CD4-positive, alpha-beta T cell (primary cell): ENCODE measurements at regions of chr4 and their contacts with region 1.

Region 1: GRCh38 chr4:77862478-77863216 is at the start of gene MRPL1:
- DNase-seq: peak; percentile 78 to 96 (median 85)
- ATAC-seq: peak; percentile 77
- H3K4me3 ChIP-seq: peak within 1 kb of the TSS; percentile 77
- H3K4me3 Mint-ChIP-seq: peak within 1 kb of the TSS; percentile 91
- H3K27ac ChIP-seq: peak within 1 kb of the TSS; percentile 99
- H3K27ac Mint-ChIP-seq: peak within 1 kb of the TSS; percentile 99
- H3K4me1 ChIP-seq: peaks cover 42% of the 10 kb centered on the region
- H3K4me1 Mint-ChIP-seq: peaks cover 66% of the 10 kb centered on the region
- H3K27me3 ChIP-seq: no peaks in the 10 kb centered on the region
- H3K27me3 Mint-ChIP-seq: peaks cover 7% of the 10 kb centered on the region
- CTCF ChIP-seq: no peak
- total RNA-seq, gene MRPL1: 14.8 to 17.5 TPM

Region 2: DNA sequence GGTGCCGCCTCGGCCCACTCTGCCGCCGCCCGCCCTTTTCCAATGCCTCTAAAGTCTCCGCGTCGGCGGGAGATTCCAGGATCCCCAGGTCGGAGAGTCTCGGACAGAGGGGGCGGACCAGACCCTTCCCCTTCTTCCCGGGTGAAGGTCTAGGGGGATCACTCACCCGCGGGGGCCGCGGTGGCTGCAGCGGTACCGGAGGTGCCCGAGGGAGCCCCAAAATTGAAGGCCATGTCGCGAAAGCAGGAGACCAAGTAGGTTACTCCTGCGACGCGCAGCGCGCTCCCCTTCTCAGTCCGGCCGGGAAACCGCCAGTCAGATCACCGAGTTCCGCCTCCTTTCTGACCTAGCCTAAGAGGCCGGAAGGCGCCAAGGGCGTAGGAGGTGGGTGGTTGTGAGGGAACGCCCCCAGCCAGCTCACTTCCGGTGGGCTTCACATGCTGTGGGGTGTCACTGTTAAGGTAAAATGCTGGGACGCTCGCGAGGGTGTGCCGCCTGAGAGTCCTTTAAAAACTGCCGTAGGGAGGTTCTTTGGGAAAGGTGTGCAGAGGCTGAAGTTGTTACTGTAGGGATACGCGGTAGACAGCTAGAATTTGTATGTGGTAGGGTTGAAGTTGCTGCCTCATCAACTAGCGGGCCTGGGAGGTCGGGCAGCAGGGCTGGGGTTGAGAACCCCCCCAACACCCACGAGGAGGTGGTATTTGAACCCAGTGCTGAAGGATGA is 1714.3 kb before region 1 on chr4 and contains the start of gene NUP54:
- CTCF ChIA-PET with region 1: no interaction called
- POLR2A ChIA-PET with region 1: interaction called, 6 read pairs
- intact Hi-C with region 1: loop called in 1 of 2 experiments (anchors 5 kb)
- DNase-seq: peak; percentile 90 to 97 (median 93)
- ATAC-seq: peak; percentile 97
- H3K4me3 ChIP-seq: peak within 1 kb of the TSS; percentile 95
- H3K4me3 Mint-ChIP-seq: peak within 1 kb of the TSS; percentile 99
- H3K27ac ChIP-seq: peak within 1 kb of the TSS; percentile 80 to 90
- H3K27ac Mint-ChIP-seq: peak within 1 kb of the TSS; percentile 92
- H3K4me1 ChIP-seq: peaks cover 15% of the 10 kb centered on the region
- H3K4me1 Mint-ChIP-seq: peaks cover 38% of the 10 kb centered on the region
- H3K27me3 ChIP-seq: no peaks in the 10 kb centered on the region
- H3K27me3 Mint-ChIP-seq: no peaks in the 10 kb centered on the region
- CTCF ChIP-seq: no peak
- total RNA-seq, gene NUP54: 94.1 to 108 TPM

Region 3: DNA sequence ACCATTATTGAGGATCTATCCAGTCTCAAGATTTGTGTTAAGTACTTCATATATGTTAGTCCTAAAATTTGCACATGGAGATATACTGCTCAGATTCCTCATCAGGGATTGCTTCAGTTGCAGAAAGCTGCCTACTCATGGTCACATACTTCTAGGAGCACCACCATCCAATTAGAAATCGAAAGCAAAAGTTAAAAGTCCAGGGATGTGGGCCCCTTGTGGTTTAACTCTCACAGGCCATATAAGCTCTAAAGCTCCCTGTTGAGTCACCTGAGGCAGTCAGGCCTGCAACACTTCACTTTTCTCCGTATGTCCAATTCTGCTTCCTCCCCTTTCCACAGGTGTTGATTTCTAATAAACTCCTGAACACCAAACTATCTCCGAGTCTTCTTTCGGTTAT is 127.7 kb before region 1 on chr4:
- CTCF ChIA-PET with region 1: interaction called, 5 read pairs
- POLR2A ChIA-PET with region 1: interaction called, 8 read pairs
- intact Hi-C with region 1: loop called (anchors 5 kb)
- DNase-seq: peak in 5 of 14 experiments; percentile 4 to 81 (median 62)
- ATAC-seq: peak; percentile 71
- H3K4me3 ChIP-seq: no peak overlapping the region
- H3K4me3 Mint-ChIP-seq: peak overlapping the region; percentile 61
- H3K27ac ChIP-seq: no peak overlapping the region
- H3K27ac Mint-ChIP-seq: peak overlapping the region; percentile 78
- H3K4me1 ChIP-seq: peaks cover 5% of the 10 kb centered on the region
- H3K4me1 Mint-ChIP-seq: peaks cover 82% of the 10 kb centered on the region
- H3K27me3 ChIP-seq: no peaks in the 10 kb centered on the region
- H3K27me3 Mint-ChIP-seq: no peaks in the 10 kb centered on the region
- CTCF ChIP-seq: no peak

Region 4: DNA sequence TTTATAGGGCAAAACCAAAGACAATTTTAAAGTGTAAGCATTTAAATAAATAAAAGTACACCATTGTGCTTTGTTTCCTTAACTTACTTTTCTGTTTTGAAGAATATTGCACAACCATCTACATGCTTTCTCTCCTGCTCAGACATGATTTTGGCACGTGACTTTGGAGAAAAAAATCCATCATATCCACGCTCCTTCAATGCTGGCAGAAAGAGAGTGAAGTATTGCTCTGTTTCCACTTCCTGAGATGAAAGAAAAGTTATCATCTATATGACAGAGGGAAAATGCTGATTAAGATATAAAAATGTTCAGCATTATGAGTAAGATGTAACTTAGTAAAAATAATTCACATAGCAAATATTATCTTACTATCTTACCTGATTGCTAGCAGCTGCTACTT is 120.6 kb before region 1 on chr4:
- CTCF ChIA-PET with region 1: no interaction called
- POLR2A ChIA-PET with region 1: interaction called, 5 read pairs
- intact Hi-C with region 1: loop called (anchors 5 kb)
- DNase-seq: no peak
- ATAC-seq: no peak
- H3K4me3 ChIP-seq: no peak overlapping the region
- H3K4me3 Mint-ChIP-seq: no peak overlapping the region
- H3K27ac ChIP-seq: no peak overlapping the region
- H3K27ac Mint-ChIP-seq: peak overlapping the region; percentile 63
- H3K4me1 ChIP-seq: peaks cover 5% of the 10 kb centered on the region
- H3K4me1 Mint-ChIP-seq: peaks cover 70% of the 10 kb centered on the region
- H3K27me3 ChIP-seq: no peaks in the 10 kb centered on the region
- H3K27me3 Mint-ChIP-seq: no peaks in the 10 kb centered on the region
- CTCF ChIP-seq: no peak

Region 5: GRCh38 chr4:77782102-77782835 is 80.4 kb before region 1 on chr4:
- CTCF ChIA-PET with region 1: interaction called, 4 read pairs
- POLR2A ChIA-PET with region 1: interaction called, 11 read pairs
- intact Hi-C with region 1: no loop called
- DNase-seq: no peak
- ATAC-seq: no peak
- H3K4me3 ChIP-seq: no peak overlapping the region
- H3K4me3 Mint-ChIP-seq: peak overlapping the region; percentile 28
- H3K27ac ChIP-seq: no peak overlapping the region
- H3K27ac Mint-ChIP-seq: peak overlapping the region; percentile 8
- H3K4me1 ChIP-seq: peaks cover 35% of the 10 kb centered on the region
- H3K4me1 Mint-ChIP-seq: peaks cover 81% of the 10 kb centered on the region
- H3K27me3 ChIP-seq: no peaks in the 10 kb centered on the region
- H3K27me3 Mint-ChIP-seq: no peaks in the 10 kb centered on the region
- CTCF ChIP-seq: no peak

Region 6: DNA sequence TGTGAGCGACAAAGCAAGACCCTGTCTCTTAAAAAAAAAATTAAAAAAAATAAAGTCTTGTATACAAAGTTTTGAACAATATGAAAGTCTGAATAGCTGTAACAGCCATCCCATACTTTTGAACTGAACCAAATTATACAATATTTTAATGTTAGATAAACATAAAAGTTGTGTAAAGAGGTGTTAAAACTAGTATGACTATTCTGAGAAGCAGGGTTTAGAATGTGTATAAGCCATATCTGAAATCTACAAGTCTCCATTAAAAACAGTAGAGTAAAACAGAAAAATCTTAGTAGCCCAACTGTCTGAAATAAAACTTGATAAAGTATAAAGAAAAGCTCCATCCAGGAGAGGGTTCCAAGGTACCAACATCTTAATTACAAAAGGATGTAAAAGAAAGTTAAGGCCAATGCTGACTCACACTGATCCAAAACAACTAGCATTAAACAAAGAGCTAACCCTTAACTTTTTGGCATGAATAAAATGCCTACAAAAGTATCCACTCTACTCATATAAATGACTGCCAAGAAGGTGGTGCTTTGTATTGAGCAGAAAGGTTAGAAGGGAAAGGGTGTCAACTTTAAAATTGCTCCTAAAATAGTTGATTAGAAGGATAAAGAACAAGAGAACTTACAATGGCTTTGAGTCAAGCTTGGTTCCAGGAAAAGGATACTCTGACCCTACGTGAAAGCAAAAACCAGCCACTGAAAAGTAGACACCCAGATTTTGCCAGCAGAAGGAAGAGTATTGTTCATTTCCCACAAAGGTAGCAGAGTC is 62.0 kb before region 1 on chr4:
- CTCF ChIA-PET with region 1: interaction called, 14 read pairs
- POLR2A ChIA-PET with region 1: interaction called, 63 read pairs
- intact Hi-C with region 1: no loop called
- DNase-seq: no peak
- ATAC-seq: peak; percentile 3
- H3K4me3 ChIP-seq: peak overlapping the region; percentile 33
- H3K4me3 Mint-ChIP-seq: peak overlapping the region; percentile 75
- H3K27ac ChIP-seq: peak overlapping the region in 1 of 2 donors; percentile 73
- H3K27ac Mint-ChIP-seq: peak overlapping the region; percentile 77
- H3K4me1 ChIP-seq: peaks cover 33% of the 10 kb centered on the region
- H3K4me1 Mint-ChIP-seq: peaks cover 88% of the 10 kb centered on the region
- H3K27me3 ChIP-seq: no peaks in the 10 kb centered on the region
- H3K27me3 Mint-ChIP-seq: no peaks in the 10 kb centered on the region
- CTCF ChIP-seq: no peak

Region 7: DNA sequence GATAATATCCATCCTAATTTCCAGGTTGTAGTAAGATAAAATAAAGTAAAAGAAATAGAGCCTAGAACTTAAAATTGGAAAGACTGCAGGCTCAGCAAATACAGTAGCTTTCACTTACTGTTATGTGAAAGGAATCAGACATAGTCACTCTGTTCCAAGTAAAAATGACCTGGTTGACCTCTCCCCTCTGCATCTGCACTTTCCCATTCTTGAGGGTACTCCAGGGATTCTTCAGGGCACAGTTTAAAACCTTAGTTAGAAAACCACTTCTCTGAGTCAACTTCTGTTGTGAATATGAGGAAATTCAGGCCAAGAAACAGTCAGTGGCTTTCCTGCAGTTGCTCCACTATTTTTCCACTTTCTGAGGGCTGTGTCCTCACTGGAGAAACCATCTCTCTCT is 237.4 kb after region 1 on chr4:
- CTCF ChIA-PET with region 1: no interaction called
- POLR2A ChIA-PET with region 1: no interaction called
- intact Hi-C with region 1: no loop called
- DNase-seq: no peak
- ATAC-seq: no peak
- H3K4me3 ChIP-seq: no peak overlapping the region
- H3K4me3 Mint-ChIP-seq: no peak overlapping the region
- H3K27ac ChIP-seq: no peak overlapping the region
- H3K27ac Mint-ChIP-seq: no peak overlapping the region
- H3K4me1 ChIP-seq: no peaks in the 10 kb centered on the region
- H3K4me1 Mint-ChIP-seq: no peaks in the 10 kb centered on the region
- H3K27me3 ChIP-seq: no peaks in the 10 kb centered on the region
- H3K27me3 Mint-ChIP-seq: peaks cover 14% of the 10 kb centered on the region
- CTCF ChIP-seq: no peak